Cardiac septum (tissue), 1 donor: ENCODE measurements at regions of chr6 and their contacts with region 1.

Region 1: DNA sequence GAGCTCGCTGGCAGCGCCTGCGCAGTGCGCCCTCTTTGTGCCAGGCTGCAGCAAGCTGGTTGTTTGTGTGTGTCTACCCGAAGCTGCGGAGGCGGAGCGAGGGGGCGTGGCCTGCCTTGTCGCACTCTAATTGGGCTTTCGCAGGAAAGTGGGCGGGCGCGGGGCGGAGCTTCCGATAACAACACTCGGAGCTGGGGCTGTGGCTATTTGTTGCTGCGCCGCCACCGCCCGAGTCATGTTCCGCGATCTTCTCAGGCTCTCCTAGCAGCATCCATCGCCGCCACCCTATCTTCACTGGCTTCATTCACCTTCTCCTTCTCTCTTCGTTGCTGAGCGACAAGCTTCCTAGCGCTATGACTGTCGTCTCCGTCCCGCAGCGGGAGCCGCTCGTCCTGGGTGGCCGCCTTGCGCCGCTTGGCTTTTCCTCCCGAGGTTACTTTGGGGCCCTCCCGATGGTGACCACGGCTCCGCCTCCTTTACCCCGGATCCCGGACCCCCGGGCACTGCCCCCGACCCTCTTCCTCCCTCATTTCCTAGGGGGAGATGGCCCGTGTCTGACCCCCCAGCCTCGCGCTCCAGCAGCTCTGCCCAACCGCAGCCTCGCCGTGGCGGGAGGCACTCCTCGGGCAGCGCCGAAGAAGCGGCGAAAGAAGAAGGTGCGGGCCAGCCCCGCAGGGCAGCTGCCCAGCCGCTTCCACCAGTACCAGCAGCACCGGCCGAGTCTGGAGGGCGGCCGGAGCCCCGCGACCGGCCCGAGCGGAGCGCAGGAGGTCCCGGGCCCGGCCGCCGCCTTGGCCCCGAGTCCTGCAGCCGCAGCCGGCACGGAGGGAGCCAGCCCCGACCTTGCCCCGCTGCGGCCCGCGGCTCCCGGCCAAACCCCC is at the start of gene PNRC1:
- DNase-seq: peak; percentile 100
- total RNA-seq, gene PNRC1: 211 TPM

Region 2: DNA sequence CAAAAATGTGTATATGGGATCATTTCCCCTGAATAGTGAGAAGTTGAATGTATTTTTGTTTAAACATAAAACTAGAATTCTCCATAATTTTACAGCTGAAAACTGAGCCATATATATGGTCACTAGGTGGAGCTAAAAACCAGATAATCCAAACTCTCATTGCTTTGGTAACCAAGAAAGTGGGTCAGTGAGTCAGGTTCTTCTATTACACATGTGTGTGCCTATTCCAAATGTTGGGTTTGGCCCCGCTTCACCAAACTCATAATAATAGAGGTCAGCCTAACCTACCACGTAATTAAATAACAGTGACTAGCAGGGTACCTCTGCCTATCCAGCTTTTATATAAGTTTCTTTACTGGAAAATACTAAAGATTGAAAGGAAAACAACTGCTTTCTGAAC is 98.1 kb before region 1 on chr6:
- intact Hi-C with region 1: loop called (anchors 2 kb)
- DNase-seq: no peak

Region 3: GRCh38 chr6:89035252-89036106 is 45.3 kb before region 1 on chr6:
- intact Hi-C with region 1: loop called (anchors 2 kb)
- DNase-seq: peak; percentile 89

Region 4: DNA sequence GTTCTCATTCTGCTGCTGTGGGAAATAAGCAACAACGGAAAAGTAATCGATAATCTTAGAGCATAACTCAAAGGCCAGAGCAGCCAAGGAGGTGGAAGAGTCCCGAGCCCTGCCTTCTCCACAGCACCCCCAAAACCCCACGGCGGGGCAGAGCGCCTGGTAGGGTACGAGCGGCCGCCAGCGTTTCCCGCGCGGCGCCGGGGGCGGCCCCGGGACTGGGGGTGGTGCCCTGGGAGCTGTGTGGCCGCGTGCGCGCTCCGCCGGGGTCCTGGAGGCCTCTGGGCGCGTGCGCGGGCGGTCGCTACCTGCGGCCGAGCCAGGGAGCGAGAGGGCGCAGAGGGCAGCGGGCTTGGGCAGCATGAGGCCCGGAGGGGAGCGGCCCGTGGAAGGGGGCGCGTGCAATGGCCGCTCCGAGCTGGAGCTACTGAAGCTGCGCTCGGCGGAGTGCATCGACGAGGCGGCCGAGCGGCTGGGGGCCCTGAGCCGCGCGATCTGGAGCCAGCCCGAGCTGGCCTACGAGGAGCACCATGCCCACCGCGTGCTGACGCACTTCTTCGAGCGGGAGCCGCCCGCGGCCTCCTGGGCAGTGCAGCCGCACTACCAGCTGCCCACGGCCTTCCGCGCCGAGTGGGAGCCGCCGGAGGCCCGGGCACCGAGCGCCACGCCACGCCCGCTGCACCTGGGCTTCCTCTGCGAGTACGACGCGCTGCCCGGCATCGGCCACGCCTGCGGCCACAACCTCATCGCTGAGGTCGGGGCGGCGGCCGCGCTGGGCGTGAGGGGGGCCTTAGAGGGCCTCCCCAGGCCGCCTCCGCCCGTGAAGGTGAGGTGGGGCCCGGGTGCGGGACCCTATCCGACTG is 65.2 kb after region 1 on chr6 and contains the start of gene PM20D2:
- intact Hi-C with region 1: loop called (anchors 2 kb)
- DNase-seq: peak; percentile 88
- total RNA-seq, gene PM20D2: 13.0 TPM

Region 5: DNA sequence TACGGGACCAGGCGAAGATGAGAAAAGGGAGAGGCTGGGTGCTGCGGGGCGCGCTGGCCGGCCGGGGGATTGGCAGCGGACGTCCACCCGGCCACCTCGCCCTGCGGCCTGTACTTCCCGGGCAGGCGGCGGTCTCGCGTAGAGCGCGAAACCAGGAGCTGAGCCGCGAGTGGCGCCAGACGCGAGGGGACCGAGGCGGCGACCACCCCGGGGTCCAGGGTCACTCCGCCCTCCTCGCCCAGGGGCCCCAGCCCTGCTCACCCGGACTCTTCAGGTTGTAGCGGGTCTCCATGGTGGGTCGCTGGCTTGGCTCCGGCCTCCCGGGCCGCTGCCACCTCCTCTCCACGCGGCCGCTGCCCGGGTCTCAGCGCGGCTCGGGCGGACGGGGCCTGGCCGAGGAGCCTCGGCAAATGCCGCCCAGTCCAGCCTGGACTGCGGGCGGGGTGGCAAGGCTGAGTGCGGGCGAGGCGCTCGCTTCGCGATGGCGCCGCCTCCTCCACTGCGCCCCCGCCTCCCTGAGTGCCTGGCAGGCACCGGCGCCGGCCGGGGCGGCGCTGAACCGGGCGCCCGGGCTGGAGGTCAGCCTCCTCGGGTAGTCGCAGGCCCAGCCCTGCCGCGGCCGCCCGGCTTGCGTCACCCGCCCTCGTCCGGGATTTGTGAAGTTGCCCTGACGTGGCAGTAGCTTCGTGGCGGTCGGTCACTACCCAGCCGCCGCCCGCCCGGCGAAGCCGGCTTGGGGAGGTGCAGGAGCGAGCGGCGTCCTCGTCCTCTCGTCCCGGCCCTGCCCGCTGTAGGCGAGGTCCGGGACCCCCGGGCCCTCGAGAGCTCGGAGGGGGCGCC is 271.7 kb after region 1 on chr6 and contains the start of gene UBE2J1:
- intact Hi-C with region 1: loop called (anchors 1 kb)
- DNase-seq: peak; percentile 97
- total RNA-seq, gene UBE2J1: 18.0 TPM